ENCODE measurements at regions of chr5 and their contacts with region 1.

Region 1: GRCh38 chr5:132007399-132008165 is 3.9 kb downstream of the ACSL6 start:
- DNase-seq: peak; percentile 76
- ATAC-seq: peak; percentile 54
- H3K4me3 ChIP-seq: no peak overlapping the region
- H3K27ac ChIP-seq: no peak overlapping the region
- H3K4me1 ChIP-seq: peaks cover 56% of the 10 kb centered on the region
- H3K27me3 ChIP-seq: peaks cover 11 to 31% of the 10 kb centered on the region in 2 experiments; a peak in 3 of 5 replicates
- CTCF ChIP-seq: peak; percentile 91
- EP300 ChIP-seq: no peak
- POLR2A ChIP-seq: no peak
- RAD21 ChIP-seq: peak; percentile 93

Region 2: DNA sequence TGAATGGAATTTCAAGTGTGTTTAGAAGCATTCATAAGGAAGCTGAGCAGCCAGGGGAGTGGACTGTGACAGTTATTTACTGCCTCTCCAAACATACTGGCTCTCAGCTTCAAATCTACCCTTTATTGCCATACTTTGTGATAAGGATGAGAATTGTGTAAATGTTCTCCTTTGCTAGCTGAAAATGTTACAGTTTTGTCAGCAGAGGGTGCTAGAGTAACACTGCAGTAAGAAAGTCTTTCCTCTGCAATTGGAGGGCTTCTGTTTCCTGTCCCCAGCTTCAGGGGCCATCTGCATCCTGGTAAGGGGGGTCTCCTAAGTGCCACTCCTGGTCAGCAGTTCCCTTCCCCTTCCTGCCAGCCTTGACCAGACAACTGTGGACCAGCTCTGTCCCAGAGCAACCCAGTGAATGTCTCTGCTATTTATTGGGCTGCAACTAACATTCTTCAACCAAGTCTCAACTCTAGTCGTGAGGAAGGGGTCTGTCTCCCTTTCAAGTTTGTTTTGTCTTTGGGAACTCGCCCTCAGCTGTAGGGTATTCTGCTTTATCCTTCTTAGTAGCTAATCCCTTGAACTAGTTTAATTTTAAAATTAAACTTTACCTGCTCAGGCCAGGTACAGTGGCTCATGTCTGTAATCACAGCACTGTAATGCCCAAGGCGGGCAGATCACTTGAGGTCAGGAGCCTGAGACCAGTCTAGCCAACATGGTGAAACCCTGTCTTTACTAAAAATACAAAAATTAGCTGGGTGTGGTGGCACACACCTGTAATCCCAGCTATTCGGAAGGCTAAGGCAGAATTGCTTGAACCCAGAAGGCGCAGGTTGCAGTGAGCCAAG is 417.9 kb before region 1 on chr5:
- CTCF ChIA-PET with region 1: interaction called, 7 read pairs
- POLR2A ChIA-PET with region 1: interaction called, 3 read pairs
- in situ Hi-C with region 1: loop called (anchors 10 kb)
- intact Hi-C with region 1: loop called (anchors 1 kb)
- DNase-seq: peak; percentile 60
- ATAC-seq: peak; percentile 86
- H3K4me3 ChIP-seq: no peak overlapping the region
- H3K27ac ChIP-seq: no peak overlapping the region
- H3K4me1 ChIP-seq: peaks cover 15% of the 10 kb centered on the region; the same call in 1 of the 2 replicates
- H3K27me3 ChIP-seq: no peaks in the 10 kb centered on the region
- CTCF ChIP-seq: peak; percentile 87
- EP300 ChIP-seq: no peak
- POLR2A ChIP-seq: no peak
- RAD21 ChIP-seq: peak; percentile 87

Region 3: DNA sequence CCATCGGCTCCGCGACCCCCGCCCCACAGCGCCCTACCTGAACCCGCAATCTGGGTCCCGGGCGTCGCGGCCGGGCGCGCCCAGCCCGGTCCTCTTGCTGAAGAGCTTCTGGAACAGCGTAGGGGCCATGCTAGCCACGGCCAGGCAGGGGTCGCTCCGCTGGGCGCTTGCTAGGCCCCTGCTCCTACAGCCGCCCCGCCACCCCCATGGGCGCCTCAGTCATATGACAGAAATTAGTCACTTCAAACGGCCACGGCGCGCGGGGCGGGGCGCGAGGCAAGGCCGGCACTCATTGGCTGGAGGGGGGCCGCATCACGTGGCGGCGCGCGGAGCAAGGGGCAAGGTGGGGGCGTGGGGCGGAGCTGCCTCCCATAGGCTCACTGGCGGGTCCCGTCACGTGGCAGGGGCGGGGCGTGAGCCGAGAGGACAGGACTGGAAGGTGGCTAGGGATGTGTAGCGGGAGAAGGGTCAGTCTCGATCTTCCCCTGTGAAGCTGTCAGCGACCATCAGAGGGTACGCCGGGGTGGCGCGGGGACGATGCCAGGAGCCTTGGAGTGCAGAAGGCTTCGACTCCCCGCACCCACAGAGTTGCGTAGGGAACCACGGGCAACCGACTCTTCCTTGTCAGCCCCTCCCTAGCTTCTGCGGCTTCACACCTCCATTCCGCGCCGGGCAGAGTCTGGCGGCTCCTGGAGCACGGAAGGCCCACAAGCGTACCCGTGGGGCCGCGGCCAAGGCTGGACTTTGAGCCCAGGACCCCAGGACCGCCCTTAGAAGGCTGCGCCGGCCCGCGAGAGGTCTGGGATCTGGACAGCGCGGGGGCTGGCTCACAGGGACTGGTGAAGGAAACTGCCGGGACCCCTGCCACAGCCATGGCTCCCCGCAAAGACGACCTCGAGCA is 210.5 kb before region 1 on chr5 and contains the start of gene FNIP1:
- CTCF ChIA-PET with region 1: no interaction called
- POLR2A ChIA-PET with region 1: interaction called, 91 read pairs
- in situ Hi-C with region 1: no loop called
- intact Hi-C with region 1: loop called (anchors 1 kb)
- DNase-seq: peak; percentile 95
- ATAC-seq: peak; percentile 93
- H3K4me3 ChIP-seq: peak within 1 kb of the TSS; percentile 90 to 96 (median 95)
- H3K27ac ChIP-seq: peak within 1 kb of the TSS; percentile 99
- H3K4me1 ChIP-seq: peaks cover 36% of the 10 kb centered on the region
- H3K27me3 ChIP-seq: no peaks in the 10 kb centered on the region; a peak in 1 of 5 replicates
- CTCF ChIP-seq: peak; percentile 31
- EP300 ChIP-seq: peak in 1 of 2 experiments; percentile 52; a peak in 1 of 4 replicates
- POLR2A ChIP-seq: peak; percentile 99
- RAD21 ChIP-seq: peak; percentile 26; the same call in 1 of the 2 replicates
- total RNA-seq, gene FNIP1: 29.3 and 39.7 TPM in 2 replicates

Region 4: GRCh38 chr5:131877873-131878272 is 129.7 kb before region 1 on chr5:
- CTCF ChIA-PET with region 1: no interaction called
- POLR2A ChIA-PET with region 1: no interaction called
- in situ Hi-C with region 1: no loop called
- intact Hi-C with region 1: loop called (anchors 5 kb)
- DNase-seq: no peak
- ATAC-seq: peak; percentile 57
- H3K4me3 ChIP-seq: no peak overlapping the region
- H3K27ac ChIP-seq: no peak overlapping the region
- H3K4me1 ChIP-seq: no peaks in the 10 kb centered on the region
- H3K27me3 ChIP-seq: no peaks in the 10 kb centered on the region; a peak in 1 of 5 replicates
- CTCF ChIP-seq: no peak
- EP300 ChIP-seq: no peak
- POLR2A ChIP-seq: no peak
- RAD21 ChIP-seq: no peak

Region 5: GRCh38 chr5:131959906-131960305 is 47.7 kb before region 1 on chr5:
- CTCF ChIA-PET with region 1: no interaction called
- POLR2A ChIA-PET with region 1: no interaction called
- in situ Hi-C with region 1: no loop called
- intact Hi-C with region 1: loop called (anchors 5 kb)
- DNase-seq: no peak
- ATAC-seq: no peak
- H3K4me3 ChIP-seq: no peak overlapping the region
- H3K27ac ChIP-seq: no peak overlapping the region
- H3K4me1 ChIP-seq: peaks cover 18% of the 10 kb centered on the region
- H3K27me3 ChIP-seq: no peaks in the 10 kb centered on the region
- CTCF ChIP-seq: no peak
- EP300 ChIP-seq: no peak
- POLR2A ChIP-seq: no peak
- RAD21 ChIP-seq: no peak